ENCODE measurements at regions of chr3 and their contacts with region 1.

Region 1: DNA sequence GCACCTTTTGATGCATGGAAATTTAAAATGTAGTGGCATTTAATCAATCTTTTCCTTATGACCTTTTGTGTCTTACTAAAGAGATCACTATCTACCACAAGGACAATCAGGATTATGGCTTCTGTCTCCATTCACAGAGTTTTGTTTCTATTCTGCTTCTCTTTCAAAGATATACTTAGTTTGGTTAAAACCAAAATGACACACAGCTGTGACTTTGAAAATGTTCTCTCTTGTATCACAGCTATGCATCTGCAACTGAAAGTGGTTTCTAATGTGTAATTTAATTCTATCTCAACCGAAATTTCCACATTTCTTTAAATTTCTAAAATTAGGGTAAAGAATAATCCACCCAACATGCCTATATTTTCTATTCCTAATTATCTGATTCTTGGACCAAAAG is 27.7 kb downstream of the HLTF start:
- DNase-seq: no peak
- ATAC-seq: no peak
- H3K4me3 ChIP-seq: no peak overlapping the region
- H3K4me3 Mint-ChIP-seq: no peak overlapping the region
- H3K27ac ChIP-seq: no peak overlapping the region
- H3K27ac Mint-ChIP-seq: no peak overlapping the region
- H3K4me1 ChIP-seq: no peaks in the 10 kb centered on the region
- H3K4me1 Mint-ChIP-seq: no peaks in the 10 kb centered on the region
- H3K27me3 ChIP-seq: no peaks in the 10 kb centered on the region
- H3K27me3 Mint-ChIP-seq: no peaks in the 10 kb centered on the region

Region 2: DNA sequence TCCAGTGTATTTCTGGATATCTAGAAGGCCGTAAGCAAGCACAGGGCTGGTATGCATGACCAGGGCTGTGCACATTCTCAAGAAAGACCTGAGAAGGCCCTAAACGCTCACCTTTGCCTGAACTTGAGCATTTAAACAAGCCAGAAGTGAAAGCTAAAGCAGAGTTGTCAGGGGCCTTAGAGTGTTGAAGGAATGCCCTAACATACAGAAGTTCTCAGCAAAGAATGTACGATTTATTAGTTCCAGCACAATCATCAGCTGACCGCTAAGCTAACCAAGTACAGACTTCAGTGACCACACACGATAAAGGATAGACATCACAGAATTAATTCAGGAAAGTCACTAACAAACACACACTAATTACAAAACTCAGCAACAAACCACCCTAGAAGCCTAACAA is 19.0 kb after region 1 on chr3:
- CTCF ChIA-PET with region 1: no interaction called
- POLR2A ChIA-PET with region 1: interaction called in 1 of 2 experiments, 14 read pairs
- DNase-seq: no peak
- ATAC-seq: no peak
- H3K4me3 ChIP-seq: no peak overlapping the region
- H3K4me3 Mint-ChIP-seq: no peak overlapping the region
- H3K27ac ChIP-seq: no peak overlapping the region
- H3K27ac Mint-ChIP-seq: no peak overlapping the region
- H3K4me1 ChIP-seq: no peaks in the 10 kb centered on the region
- H3K4me1 Mint-ChIP-seq: peaks cover 7 to 11% (median 8%) of the 10 kb centered on the region in 3 donors
- H3K27me3 ChIP-seq: no peaks in the 10 kb centered on the region
- H3K27me3 Mint-ChIP-seq: no peaks in the 10 kb centered on the region

Measured in T-cell (primary cell).